Heart left ventricle (tissue), 16 donors: ENCODE measurements at regions of chr15 and their contacts with region 1.

Region 1: GRCh38 chr15:99282121-99282520 is 30.8 kb downstream of the LRRC28 start:
- DNase-seq: no peak
- ATAC-seq: peak in 1 of 4 donors; percentile 41
- H3K4me3 ChIP-seq: no peak overlapping the region
- H3K27ac ChIP-seq: peak overlapping the region in 4 of 12 donors; percentile 5 to 30 (median 19)
- H3K4me1 ChIP-seq: peaks cover 0 to 25% (median 6%) of the 10 kb centered on the region in 12 donors
- H3K27me3 ChIP-seq: no peaks in the 10 kb centered on the region
- CTCF ChIP-seq: no peak
- POLR2A ChIP-seq: no peak

Region 2: DNA sequence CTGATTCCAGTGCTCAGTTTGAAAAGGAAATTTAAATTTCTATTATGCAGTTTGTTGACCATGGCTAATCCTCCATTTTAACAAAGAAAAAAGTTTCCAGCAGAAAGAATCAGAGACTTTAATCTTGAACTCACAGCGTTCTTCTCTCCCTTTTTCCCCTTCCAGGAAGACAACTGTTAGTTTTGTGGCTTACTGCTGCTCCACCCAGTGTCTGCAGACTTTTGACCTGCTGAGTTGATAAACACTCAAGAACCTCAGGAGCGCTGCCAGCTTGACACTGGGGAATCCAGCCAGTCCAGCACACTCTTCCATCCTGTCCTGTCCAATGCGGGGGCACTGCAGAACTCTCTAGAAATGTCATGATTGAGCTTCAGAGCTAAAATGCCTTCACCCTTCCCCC is 103.7 kb after region 1 on chr15:
- intact Hi-C with region 1: loop called in 1 of 10 experiments (anchors 10 kb)
- DNase-seq: peak; percentile 72 to 85 (median 76)
- ATAC-seq: peak; percentile 86 to 97 (median 96)
- H3K4me3 ChIP-seq: no peak overlapping the region
- H3K27ac ChIP-seq: peak overlapping the region in 9 of 12 donors; percentile 3 to 42 (median 33)
- H3K4me1 ChIP-seq: peaks cover 0 to 23% (median 16%) of the 10 kb centered on the region in 12 donors
- H3K27me3 ChIP-seq: no peaks in the 10 kb centered on the region
- CTCF ChIP-seq: peak in 2 of 12 donors; percentile 11 to 18
- POLR2A ChIP-seq: no peak

Region 3: DNA sequence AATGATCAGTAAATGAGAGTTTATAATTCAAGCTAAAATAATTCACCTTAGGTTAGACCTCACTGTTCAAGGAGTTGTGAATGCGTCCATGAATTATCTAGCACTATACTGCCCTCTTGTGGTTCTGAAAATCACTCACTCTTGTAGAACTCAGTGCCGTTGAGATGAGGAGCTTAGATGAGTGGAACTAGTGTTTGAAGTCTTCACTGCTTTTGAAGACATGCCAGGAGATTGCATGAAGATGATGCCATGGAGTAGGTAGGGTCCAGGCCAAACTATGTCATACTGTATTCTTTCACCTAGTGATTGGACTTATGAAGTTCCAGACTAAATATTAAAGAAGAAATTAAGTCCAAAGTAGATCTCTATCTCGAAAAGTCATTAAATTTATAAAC is 422.3 kb after region 1 on chr15:
- intact Hi-C with region 1: loop called (anchors 1 to 5 kb)
- DNase-seq: peak in 2 of 5 donors; percentile 39 to 57
- ATAC-seq: peak; percentile 71 to 79 (median 76)
- H3K4me3 ChIP-seq: peak overlapping the region in 1 of 12 donors; percentile 8
- H3K27ac ChIP-seq: peak overlapping the region; percentile 21 to 87 (median 80)
- H3K4me1 ChIP-seq: peaks cover 3 to 69% (median 45%) of the 10 kb centered on the region in 12 donors
- H3K27me3 ChIP-seq: no peaks in the 10 kb centered on the region
- CTCF ChIP-seq: peak; percentile 66 to 85 (median 80)
- POLR2A ChIP-seq: no peak

Region 4: DNA sequence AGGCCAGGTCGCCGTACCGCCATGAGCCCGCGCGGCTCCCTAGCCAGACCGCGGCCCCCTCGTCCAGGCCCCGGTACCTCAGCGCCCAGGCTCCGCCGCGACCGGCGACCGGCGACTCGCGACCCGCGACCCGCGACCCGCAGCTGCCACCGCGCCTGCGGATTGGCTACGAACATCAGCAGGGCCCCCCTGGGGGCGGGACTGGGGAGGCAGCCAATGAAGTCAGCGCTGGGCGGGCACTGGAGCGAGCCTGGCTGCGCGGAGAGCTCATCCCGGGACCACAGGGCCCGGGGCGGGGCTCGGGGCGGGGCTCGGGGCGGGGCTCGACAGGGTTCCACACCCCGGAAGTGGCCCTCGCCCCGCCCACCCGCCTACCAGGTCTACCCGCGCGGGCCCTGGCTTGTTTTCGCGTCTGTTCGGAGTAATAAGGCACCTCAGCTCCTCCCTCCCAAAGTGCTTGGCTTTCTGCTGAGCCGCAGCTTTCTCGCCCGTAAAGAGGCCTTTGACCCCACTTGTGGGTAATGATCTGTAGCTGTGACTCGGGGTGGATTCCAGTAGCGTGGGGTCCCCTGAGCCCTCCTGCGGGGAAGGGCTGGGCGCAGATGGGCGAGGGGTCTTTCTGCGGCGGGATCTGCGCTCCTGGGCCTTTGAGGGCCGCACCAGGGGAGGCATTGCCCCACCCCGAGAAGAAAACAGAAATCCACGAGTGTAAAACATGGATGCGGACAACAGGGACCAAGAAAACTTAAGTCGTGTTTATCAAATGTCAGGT is 451.3 kb after region 1 on chr15 and contains the start of gene LYSMD4:
- intact Hi-C with region 1: loop called in 7 of 10 experiments (anchors 2 to 10 kb)
- DNase-seq: peak; percentile 98 to 99 (median 99)
- ATAC-seq: peak; percentile 98 to 99 (median 99)
- H3K4me3 ChIP-seq: peak within 1 kb of the TSS; percentile 55 to 99 (median 96)
- H3K27ac ChIP-seq: peak within 1 kb of the TSS; percentile 49 to 94 (median 84)
- H3K4me1 ChIP-seq: peaks cover 0 to 42% (median 19%) of the 10 kb centered on the region in 12 donors
- H3K27me3 ChIP-seq: no peaks in the 10 kb centered on the region
- CTCF ChIP-seq: no peak
- POLR2A ChIP-seq: peak in 1 of 2 donors; percentile 91
- total RNA-seq, gene LYSMD4: 8.3 to 12.8 (median 10.3) TPM